ENCODE measurements at regions of chr16 and their contacts with region 1.

Region 1: DNA sequence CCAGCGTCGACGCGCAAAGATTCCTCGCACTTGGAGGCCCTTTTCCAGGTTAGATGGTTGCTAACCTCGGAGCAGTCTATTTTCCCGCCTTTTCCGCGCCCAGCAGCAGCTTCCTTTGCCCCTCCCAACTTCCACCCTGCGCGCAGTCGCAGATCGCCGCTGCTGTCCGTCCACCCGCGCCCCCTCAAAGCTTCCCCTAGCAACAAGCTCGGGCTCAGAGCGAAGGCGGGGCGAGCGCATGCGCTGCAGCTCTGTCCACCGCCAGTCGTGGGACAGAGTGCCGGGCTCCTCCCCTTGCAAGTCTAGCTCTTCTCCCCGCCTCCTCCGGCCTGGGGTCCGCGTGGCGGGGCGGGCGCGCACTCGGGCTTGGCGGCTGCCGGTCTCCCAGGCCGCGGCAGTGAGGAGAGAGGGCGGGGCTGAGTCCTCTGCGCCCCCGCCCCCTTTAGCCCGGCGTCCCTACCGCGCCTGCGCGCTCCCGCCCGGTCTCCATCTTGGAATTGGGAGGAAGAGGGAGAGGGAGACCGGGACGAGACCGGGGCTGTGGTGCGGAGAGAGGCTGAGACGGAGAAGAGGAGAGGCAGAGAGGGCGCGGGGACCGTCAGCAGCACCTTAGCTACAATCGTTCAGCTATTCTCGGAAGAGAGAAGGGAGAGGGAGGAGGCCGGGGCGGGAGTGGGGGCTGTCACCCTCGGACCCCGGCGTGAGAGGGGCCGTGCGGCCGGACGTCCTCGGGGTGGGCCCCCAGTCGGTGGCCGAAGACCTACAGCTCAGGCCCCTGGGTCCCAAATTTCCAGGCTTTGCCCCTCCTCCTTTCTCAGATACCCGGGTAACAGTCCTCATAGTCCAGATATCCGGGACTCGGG is at the start of gene TAOK2:
- DNase-seq: peak; percentile 97 to 100 (median 99)

Region 2: DNA sequence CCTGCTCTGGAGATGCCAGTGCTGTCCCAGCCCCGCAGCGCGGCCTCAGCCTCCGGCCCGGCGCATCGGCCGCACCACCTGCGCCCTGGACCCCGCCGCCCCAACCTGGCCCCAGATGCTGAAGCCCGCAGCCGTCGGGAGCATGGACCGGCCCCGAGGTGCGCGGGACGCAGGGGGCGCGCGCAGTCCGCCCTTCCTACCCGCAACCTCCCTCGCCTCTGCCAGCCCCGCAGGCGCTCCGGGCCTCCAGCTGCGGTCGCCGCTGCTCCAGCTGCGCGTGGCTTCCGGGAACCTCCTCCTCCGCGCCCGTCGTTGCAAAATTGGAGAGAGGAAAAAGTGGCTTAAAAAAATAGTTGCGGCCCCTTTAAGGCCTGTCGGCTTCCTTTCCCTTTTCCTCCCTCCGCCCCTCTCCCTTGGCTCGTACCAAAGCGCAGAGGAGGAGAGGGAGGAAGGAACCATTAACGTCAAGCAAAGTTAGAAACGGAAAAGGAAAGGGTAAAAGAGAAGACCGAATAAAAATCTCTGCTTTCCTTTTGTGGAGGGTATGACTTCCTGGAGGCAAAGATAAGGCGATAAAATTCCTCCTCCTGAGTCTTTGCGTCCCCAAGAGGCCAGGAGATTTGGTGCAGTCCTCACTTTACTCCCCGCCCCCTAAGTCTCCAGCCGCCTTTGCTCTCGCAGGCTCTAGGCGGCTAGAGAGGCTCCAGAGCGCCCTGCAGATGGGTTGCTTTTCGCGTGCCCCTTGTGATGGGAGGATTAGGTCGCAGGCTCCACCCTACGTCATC is 110.5 kb before region 1 on chr16 and contains the start of gene CDIPT:
- intact Hi-C with region 1: loop called (anchors 5 kb)
- DNase-seq: peak; percentile 89 to 100 (median 94)

Region 3: DNA sequence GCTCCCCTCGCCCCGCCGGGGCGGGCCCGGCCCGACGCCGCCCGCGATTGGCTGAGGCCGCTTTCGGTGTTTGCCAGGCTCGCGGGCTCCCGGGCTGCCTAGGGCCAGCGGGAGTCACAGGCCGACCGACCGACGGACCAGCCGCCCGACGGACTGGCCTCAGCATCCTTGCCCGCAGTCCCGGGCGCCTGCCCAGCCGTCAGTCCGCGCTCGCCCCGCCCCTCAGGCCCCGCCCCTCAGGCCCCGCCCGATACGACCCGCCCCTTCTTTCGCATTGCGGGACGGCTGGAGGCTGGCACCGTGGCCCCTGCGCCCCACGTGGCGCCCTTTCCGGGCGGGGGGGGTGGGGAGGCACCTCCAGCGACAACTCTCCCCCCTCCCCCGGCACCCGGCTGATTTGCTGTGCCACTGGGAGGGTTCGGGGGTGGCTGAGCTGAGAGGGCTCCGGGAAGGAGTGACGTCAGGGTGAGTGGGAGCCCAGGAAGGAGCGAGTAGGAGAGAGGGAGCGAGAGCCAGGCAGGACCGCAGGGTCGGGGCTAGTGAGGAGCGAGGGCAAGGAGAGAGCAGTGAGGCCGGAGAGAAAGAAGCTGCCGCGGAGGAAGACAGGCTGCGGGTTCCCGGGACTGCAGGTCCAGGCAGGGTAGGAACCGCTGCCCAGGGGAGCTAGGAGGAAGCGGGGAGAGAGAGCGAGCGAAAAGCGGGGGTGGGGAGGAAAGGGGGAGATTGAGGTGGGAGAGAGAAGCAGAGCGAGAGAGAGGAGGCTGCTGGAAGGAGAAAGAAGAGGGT is 73.3 kb before region 1 on chr16 and contains the start of gene ASPHD1:
- intact Hi-C with region 1: loop called (anchors 2 kb)
- DNase-seq: peak; percentile 74 to 98 (median 87)

Region 4: GRCh38 chr16:29995911-29996772 is 22.5 kb after region 1 on chr16 and contains the start of gene INO80E:
- intact Hi-C with region 1: loop called (anchors 1 kb)
- DNase-seq: peak; percentile 99 to 100 (median 100)

Region 5: DNA sequence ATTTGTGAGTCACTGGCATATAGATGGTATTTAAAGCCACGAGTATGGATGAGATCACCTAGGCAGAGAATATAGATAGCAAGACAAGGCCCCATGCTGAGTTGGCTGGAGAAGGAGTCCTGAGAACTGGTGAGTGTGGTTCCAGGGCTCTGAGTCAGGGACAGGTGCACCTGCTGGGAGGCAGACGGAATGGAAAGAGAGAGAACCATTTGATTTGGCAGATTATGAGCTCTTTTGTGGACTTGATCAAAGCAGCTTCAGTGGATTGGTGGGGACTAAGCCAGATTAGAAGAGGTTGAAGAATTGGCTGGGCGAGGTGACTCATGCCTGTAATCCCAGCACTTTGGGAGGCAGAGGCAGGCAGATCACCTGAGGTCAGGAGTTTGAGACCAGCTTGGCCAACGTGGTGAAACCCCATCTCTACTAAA is 45.1 kb after region 1 on chr16:
- intact Hi-C with region 1: no loop called
- DNase-seq: peak in 2 of 10 donors; percentile 71 to 81

Region 6: DNA sequence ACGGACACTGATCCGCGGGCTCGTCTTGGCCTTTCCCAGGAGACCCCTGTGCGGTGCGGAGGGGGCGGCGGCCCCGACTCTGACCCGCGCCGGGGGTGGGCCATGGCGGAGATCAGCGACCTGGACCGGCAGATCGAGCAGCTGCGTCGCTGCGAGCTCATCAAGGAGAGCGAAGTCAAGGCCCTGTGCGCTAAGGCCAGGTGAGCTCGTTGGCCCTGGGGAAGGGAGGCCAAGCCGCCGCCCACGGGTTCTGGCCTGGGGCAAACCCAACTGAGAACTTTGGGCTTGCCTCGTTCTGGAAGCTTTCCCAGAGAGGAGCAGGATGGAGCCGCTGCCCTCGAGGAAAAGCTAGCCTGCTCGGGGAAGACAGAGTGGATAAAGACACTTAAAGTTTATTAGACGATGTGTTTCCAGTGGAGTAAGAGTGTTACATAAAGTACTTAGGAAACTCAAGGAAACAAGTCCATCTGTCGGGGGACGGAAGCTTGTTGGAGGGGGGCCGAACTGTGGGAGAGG is 102.7 kb after region 1 on chr16:
- intact Hi-C with region 1: no loop called
- DNase-seq: peak in 2 of 10 donors; percentile 9 to 52